Dorsolateral prefrontal cortex (tissue), 120 donors: ENCODE measurements at regions of chr1 and their contacts with region 1.

Region 1: GRCh38 chr1:230807029-230807428 is 59.8 kb downstream of the CAPN9 start:
- DNase-seq: peak; percentile 53 to 100 (median 97)
- H3K4me3 ChIP-seq: peak overlapping the region in 18 of 59 donors; percentile 0 to 54 (median 24)
- H3K27ac ChIP-seq: peak overlapping the region; percentile 83 to 99 (median 97)
- H3K27me3 ChIP-seq: no peaks in the 10 kb centered on the region
- CTCF ChIP-seq: peak in 1 of 56 donors; percentile 20

Region 2: GRCh38 chr1:230824571-230825062 is 17.6 kb after region 1 on chr1:
- intact Hi-C with region 1: loop called (anchors 1 to 2 kb)
- DNase-seq: no peak
- H3K4me3 ChIP-seq: no peak overlapping the region
- H3K27ac ChIP-seq: peak overlapping the region; percentile 65 to 98 (median 92)
- H3K27me3 ChIP-seq: no peaks in the 10 kb centered on the region
- CTCF ChIP-seq: no peak

Region 3: DNA sequence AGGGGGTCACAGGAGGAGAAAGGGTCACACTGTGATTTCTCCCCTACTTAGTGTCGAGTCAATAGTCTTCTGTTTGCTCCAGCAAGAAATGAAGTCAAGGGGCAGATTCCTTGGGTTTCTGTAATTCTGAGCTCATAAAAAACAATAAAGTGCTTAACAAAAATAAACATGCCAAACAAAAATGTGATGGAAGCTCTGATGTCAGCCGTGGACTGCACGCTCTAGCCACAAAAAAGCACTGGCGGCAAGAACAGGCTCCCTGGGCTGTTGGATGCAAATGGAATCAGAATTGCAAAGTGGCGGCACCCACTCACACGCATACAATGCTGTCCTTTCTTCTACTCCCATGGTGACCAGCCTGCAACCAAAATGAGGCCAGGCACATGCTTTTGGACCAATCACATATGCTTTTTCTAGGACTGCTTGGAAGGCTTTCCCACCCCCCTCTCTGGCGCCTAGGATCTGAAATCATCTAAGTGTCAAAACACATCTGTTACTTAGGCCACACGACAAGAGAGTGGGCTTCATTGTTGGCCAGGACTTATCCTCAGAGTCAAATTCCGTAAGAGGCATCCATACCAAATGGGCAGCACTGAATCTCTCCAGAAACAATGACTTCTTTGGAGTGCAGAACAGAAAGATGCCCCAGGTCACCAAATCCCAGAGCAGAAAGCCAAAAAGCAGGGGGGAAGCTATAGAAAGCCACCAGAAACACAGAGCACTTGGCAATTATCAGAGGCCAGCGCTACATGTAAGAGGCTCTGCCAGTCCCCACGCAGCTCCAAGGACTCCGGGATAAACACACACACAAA is 52.1 kb after region 1 on chr1:
- intact Hi-C with region 1: loop called (anchors 1 kb)
- DNase-seq: peak; percentile 37 to 94 (median 88)
- H3K4me3 ChIP-seq: peak overlapping the region in 25 of 59 donors; percentile 0 to 40 (median 13)
- H3K27ac ChIP-seq: peak overlapping the region; percentile 58 to 97 (median 93)
- H3K27me3 ChIP-seq: no peaks in the 10 kb centered on the region
- CTCF ChIP-seq: peak in 6 of 56 donors; percentile 1 to 18 (median 12)

Region 4: DNA sequence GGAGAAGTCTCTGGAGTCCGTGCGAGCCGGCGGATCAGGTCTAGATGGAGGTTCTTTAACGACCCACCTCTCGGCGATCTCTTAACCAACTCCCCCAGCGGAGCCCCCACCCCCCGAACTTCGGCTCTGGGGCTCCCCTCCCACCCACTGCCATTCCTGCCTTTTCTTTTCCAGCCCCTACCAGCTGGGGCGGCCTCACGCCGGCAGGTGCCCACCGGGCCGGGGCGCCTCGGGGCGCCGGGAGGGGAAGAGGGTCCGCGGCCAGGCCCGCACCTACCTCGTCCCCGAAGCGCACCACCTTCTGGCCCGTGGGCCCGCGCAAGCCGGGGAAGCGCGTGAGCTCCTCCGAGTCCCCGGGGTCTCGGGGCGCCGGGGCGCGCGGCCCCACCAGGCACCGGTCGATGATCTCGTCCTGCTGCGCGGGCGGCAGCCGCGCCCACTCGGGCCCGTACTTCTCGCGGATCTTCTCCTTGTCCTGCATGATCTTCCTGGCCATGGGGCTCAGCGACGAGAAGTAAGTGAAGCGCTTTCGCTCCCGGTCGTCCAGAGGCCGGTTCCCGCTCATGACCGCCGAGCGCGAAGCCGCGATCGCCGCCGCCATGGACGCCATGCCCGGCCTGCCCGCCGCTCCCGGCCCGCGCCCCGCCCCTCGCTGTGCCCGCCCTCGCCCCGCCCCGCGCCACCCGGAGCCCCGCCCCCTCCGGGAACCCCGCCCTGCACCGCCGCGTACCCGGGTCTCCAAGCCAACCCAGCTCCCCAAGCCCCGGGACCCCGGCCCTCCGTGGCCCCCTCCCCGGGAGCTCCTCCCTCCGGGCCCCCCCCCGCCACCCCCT is 61.1 kb after region 1 on chr1 and contains the start of gene C1orf198:
- intact Hi-C with region 1: loop called in 1 of 2 experiments (anchors 2 kb)
- DNase-seq: peak; percentile 63 to 86 (median 76)
- H3K4me3 ChIP-seq: peak within 1 kb of the TSS; percentile 48 to 99 (median 90)
- H3K27ac ChIP-seq: peak within 1 kb of the TSS; percentile 46 to 97 (median 93)
- H3K27me3 ChIP-seq: no peaks in the 10 kb centered on the region
- CTCF ChIP-seq: peak in 1 of 56 donors; percentile 21
- total RNA-seq, gene C1orf198: 43.1 to 244 (median 83.2) TPM